ENCODE measurements at regions of chr9 and their contacts with region 1.

Region 1: DNA sequence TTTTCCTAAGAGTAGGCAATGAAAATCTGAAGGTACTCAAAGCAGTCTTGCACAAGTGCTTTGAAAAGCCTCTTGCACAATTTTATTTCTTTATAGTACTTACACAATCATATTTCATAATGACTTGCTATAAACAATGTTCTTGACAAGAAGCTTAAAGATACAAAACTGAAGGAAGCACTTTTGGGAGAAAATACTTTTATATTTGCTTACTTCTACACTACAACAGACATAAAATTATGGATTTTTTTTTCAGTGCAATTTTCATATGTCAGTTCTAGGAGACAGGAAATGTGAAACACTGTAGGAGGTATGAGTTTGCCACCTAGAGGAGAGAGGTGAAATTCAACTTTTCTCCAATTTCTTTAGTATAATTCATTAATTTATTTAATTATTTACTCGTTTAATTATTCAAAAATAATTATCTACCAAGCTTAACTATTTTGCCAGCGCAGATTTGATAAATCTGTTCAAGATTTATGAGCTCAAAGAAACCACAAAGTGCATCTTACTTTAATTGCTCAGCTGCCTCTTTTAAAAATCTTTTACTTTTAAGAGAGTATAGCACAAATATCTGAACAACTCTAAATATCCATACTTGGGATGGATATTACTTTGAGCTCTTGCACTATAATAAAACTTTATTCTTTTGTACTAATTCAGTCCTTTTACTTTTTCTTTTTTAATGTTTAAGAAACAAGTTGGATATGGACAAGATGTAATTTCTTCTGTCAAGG is 29.0 kb upstream of the CDKN2B start:
- DNase-seq: peak in 2 of 9 experiments; percentile 35 to 56
- ATAC-seq: peak; percentile 51
- H3K4me3 ChIP-seq: no peak overlapping the region
- H3K4me3 Mint-ChIP-seq: no peak overlapping the region
- H3K27ac ChIP-seq: no peak overlapping the region
- H3K27ac Mint-ChIP-seq: no peak overlapping the region
- H3K4me1 ChIP-seq: no peaks in the 10 kb centered on the region
- H3K4me1 Mint-ChIP-seq: no peaks in the 10 kb centered on the region
- H3K27me3 ChIP-seq: no peaks in the 10 kb centered on the region
- H3K27me3 Mint-ChIP-seq: no peaks in the 10 kb centered on the region
- CTCF ChIP-seq: peak; percentile 58

Region 2: GRCh38 chr9:21465859-21466518 is 572.1 kb before region 1 on chr9:
- CTCF ChIA-PET with region 1: no interaction called
- POLR2A ChIA-PET with region 1: interaction called, 4 read pairs
- intact Hi-C with region 1: loop called in 1 of 2 experiments (anchors 10 kb)
- DNase-seq: peak in 2 of 9 experiments; percentile 68 to 75
- ATAC-seq: peak; percentile 77
- H3K4me3 ChIP-seq: no peak overlapping the region
- H3K4me3 Mint-ChIP-seq: no peak overlapping the region
- H3K27ac ChIP-seq: no peak overlapping the region
- H3K27ac Mint-ChIP-seq: no peak overlapping the region
- H3K4me1 ChIP-seq: no peaks in the 10 kb centered on the region
- H3K4me1 Mint-ChIP-seq: peaks cover 2% of the 10 kb centered on the region
- H3K27me3 ChIP-seq: no peaks in the 10 kb centered on the region
- H3K27me3 Mint-ChIP-seq: no peaks in the 10 kb centered on the region
- CTCF ChIP-seq: peak; percentile 71

Region 3: GRCh38 chr9:22050924-22051323 is 12.8 kb after region 1 on chr9:
- CTCF ChIA-PET with region 1: interaction called, 10 read pairs
- POLR2A ChIA-PET with region 1: interaction called, 3 read pairs
- intact Hi-C with region 1: no loop called
- DNase-seq: peak in 3 of 9 experiments; percentile 12 to 51 (median 20)
- ATAC-seq: peak; percentile 61
- H3K4me3 ChIP-seq: no peak overlapping the region
- H3K4me3 Mint-ChIP-seq: peak overlapping the region; percentile 38
- H3K27ac ChIP-seq: no peak overlapping the region
- H3K27ac Mint-ChIP-seq: peak overlapping the region; percentile 37
- H3K4me1 ChIP-seq: peaks cover 28% of the 10 kb centered on the region
- H3K4me1 Mint-ChIP-seq: peaks cover 44% of the 10 kb centered on the region
- H3K27me3 ChIP-seq: no peaks in the 10 kb centered on the region
- H3K27me3 Mint-ChIP-seq: no peaks in the 10 kb centered on the region
- CTCF ChIP-seq: no peak

Region 4: GRCh38 chr9:22452415-22453010 is 414.4 kb after region 1 on chr9:
- CTCF ChIA-PET with region 1: no interaction called
- POLR2A ChIA-PET with region 1: no interaction called
- intact Hi-C with region 1: loop called (anchors 10 kb)
- DNase-seq: peak in 5 of 9 experiments; percentile 11 to 51 (median 40)
- ATAC-seq: peak; percentile 70
- H3K4me3 ChIP-seq: no peak overlapping the region
- H3K4me3 Mint-ChIP-seq: no peak overlapping the region
- H3K27ac ChIP-seq: no peak overlapping the region
- H3K27ac Mint-ChIP-seq: no peak overlapping the region
- H3K4me1 ChIP-seq: no peaks in the 10 kb centered on the region
- H3K4me1 Mint-ChIP-seq: peaks cover 5% of the 10 kb centered on the region
- H3K27me3 ChIP-seq: no peaks in the 10 kb centered on the region
- H3K27me3 Mint-ChIP-seq: peaks cover 31% of the 10 kb centered on the region
- CTCF ChIP-seq: peak; percentile 70